B cell (primary cell): ENCODE measurements at regions of chr20 and their contacts with region 1.

Region 1: DNA sequence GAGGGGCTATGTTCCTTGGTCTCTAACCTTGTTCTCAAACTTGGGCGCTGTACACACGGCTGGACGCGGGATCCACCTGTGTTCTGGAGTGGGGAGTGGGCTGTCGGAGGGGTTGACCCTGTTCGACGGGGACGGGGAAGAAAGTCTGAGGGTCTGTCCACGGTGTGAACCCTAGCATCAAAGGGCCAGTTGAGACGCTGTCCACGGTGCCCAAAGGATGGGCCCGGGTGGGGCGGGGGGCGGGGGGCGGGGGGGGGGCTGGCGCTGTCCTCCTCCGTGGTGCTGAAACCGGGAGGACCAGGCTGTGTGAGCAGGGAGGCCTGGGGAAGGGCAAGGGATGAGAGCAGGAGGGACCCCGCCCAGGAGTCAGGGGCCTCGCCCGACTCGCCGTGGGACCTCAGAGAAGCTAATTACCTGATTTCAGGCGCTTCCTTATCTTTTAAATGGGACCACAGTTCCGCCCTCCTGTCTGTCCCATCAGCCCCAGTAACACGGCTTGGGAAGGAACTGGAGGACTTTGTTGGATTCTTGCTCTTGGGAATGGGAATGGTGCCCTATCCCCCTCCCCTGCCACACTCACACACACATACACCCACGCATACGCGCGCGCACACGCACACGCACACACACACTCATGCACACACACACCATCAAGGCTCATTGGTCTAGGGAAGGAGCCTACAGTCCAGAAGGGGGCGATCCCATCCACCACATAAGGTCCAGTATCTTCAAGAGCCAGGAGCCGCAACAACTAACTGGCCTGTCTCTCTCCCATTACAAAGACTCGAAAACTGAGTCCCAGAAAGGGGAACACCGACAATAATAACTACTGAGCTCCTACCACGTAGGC is 1.0 kb upstream of the VSTM2L start:
- DNase-seq: peak; percentile 50
- ATAC-seq: peak; percentile 53
- H3K4me3 ChIP-seq: no peak overlapping the region
- H3K4me3 Mint-ChIP-seq: peak overlapping the region; percentile 77
- H3K27ac ChIP-seq: no peak overlapping the region
- H3K27ac Mint-ChIP-seq: peak overlapping the region; percentile 56
- H3K4me1 ChIP-seq: peaks cover 10 to 17% of the 10 kb centered on the region in 2 donors
- H3K4me1 Mint-ChIP-seq: peaks cover 14% of the 10 kb centered on the region
- H3K27me3 ChIP-seq: peaks cover 0 to 52% (median 22%) of the 10 kb centered on the region in 4 experiments
- H3K27me3 Mint-ChIP-seq: peaks cover 57% of the 10 kb centered on the region
- CTCF ChIP-seq: no peak

Region 2: DNA sequence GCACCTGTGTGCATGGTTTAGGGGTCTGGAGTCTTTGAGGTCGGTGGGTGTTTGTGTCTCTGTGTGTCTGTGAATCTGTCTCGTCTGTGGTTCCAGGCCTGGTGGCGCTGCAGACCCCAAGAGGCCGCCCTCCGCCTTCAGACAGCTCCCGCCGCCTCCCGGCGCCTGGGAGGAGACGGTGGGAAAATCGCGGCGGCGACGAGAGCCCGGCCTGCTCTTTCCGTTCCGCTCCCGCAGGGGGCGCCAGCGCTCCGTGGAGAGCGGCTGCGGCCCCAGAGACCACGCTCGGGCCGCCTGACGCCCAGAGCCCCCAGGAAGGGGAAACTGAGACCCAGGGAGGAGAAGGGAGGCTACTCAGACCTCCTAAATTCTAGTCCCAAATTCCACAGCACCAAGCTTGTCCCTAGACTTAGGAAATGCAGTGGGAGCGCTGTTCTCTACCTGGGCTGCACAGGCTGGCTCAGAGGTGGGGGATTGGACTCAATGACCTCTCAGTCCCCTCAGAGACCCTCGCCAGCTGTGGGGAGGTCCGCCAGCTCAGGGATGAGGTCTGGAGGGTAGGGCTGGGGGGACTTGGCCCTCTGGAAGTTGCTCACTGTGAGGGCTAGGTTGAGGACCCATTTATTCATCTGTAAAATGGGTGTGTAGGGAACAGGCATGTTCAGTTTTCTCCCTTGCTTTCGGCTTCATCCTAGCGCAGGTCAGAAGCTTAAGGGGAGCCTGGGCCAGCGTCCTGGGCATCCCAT is 337.3 kb before region 1 on chr20:
- CTCF ChIA-PET with region 1: no interaction called
- POLR2A ChIA-PET with region 1: no interaction called
- intact Hi-C with region 1: loop called (anchors 10 kb)
- DNase-seq: peak; percentile 67
- ATAC-seq: peak; percentile 49
- H3K4me3 ChIP-seq: no peak overlapping the region
- H3K4me3 Mint-ChIP-seq: no peak overlapping the region
- H3K27ac ChIP-seq: no peak overlapping the region
- H3K27ac Mint-ChIP-seq: no peak overlapping the region
- H3K4me1 ChIP-seq: peaks cover 3 to 5% of the 10 kb centered on the region in 2 donors
- H3K4me1 Mint-ChIP-seq: peaks cover 2% of the 10 kb centered on the region
- H3K27me3 ChIP-seq: peaks cover 0 to 31% (median 13%) of the 10 kb centered on the region in 4 experiments
- H3K27me3 Mint-ChIP-seq: peaks cover 43% of the 10 kb centered on the region
- CTCF ChIP-seq: peak; percentile 96

Region 3: DNA sequence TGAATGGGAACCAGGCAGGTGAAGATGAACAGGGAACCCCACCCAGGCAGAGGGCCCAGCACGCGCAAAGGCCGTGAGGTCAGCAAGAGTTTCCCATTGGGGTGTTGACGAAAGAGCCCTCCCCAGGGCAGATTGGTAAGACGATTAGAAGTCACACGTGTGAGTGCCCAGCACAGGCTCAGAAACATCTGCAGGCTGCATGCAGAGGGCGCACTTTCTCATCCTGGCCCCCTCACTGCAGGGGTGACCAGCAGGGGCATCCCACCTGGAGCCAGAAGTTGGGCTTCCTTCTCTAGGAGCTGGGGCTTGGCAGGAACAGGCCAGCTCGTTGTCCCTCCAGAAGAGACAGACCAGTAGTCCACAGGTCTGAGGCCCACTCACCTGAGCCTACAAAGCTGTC is 39.5 kb after region 1 on chr20:
- CTCF ChIA-PET with region 1: no interaction called
- POLR2A ChIA-PET with region 1: no interaction called
- intact Hi-C with region 1: no loop called
- DNase-seq: no peak
- ATAC-seq: no peak
- H3K4me3 ChIP-seq: no peak overlapping the region
- H3K4me3 Mint-ChIP-seq: no peak overlapping the region
- H3K27ac ChIP-seq: no peak overlapping the region
- H3K27ac Mint-ChIP-seq: no peak overlapping the region
- H3K4me1 ChIP-seq: no peaks in the 10 kb centered on the region
- H3K4me1 Mint-ChIP-seq: no peaks in the 10 kb centered on the region
- H3K27me3 ChIP-seq: no peaks in the 10 kb centered on the region
- H3K27me3 Mint-ChIP-seq: peaks cover 12% of the 10 kb centered on the region
- CTCF ChIP-seq: no peak